GM12878 (cell line): ENCODE measurements at regions of chr1 and their contacts with region 1.

Region 1: GRCh38 chr1:212070720-212071302 is 35.3 kb downstream of the DTL start:
- DNase-seq: no peak
- ATAC-seq: peak; percentile 63
- H3K4me3 ChIP-seq: no peak overlapping the region
- H3K27ac ChIP-seq: no peak overlapping the region
- H3K4me1 ChIP-seq: no peaks in the 10 kb centered on the region
- H3K27me3 ChIP-seq: no peaks in the 10 kb centered on the region
- CTCF ChIP-seq: peak; percentile 51 to 72 (median 54); a peak in 5 of 6 replicates
- EP300 ChIP-seq: no peak
- POLR2A ChIP-seq: no peak
- RAD21 ChIP-seq: peak; percentile 95

Region 2: DNA sequence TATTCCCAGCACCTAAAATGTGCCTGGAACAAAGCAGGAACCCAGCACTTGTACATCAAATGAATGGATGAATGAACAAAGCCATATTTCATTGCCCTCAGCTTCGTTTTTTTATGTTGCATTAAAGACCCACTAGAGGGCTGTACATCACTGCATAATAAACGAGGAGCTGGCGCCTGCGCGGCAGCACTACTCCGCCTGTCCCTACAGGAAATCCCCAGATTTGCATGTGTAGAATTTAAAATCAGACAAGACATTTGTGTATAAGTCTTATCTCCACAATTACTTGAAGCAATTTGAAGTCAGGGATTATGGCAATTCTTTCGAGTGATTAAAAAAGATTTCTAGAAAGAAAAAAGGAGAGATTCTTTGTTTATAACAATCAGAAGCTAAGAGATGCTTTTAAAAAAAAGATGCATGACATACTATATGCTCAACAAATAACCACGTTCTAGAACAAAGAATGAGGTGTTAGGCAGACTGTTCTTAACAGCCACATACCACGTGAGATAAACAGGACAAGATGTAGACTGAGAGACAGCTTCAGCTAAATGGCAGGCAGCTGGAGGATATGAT is 390.0 kb before region 1 on chr1:
- CTCF ChIA-PET with region 1: interaction called, 51 read pairs
- POLR2A ChIA-PET with region 1: interaction called, 3 read pairs
- RAD21 ChIA-PET with region 1: interaction called, 32 read pairs
- SMC1A ChIA-PET with region 1: interaction called, 40 read pairs
- in situ Hi-C with region 1: no loop called
- intact Hi-C with region 1: no loop called
- DNase-seq: peak; percentile 80
- ATAC-seq: peak; percentile 84
- H3K4me3 ChIP-seq: no peak overlapping the region
- H3K27ac ChIP-seq: peak overlapping the region; percentile 38
- H3K4me1 ChIP-seq: peaks cover 16% of the 10 kb centered on the region
- H3K27me3 ChIP-seq: no peaks in the 10 kb centered on the region
- CTCF ChIP-seq: peak; percentile 66 to 87 (median 81); a peak in 5 of 6 replicates
- EP300 ChIP-seq: 0 out of 4 replicates have a peak, but pooled peaks of 1 of the 2 experiments have one; percentile 20
- POLR2A ChIP-seq: no peak
- RAD21 ChIP-seq: peak; percentile 88

Region 3: GRCh38 chr1:211843018-211843417 is 227.8 kb before region 1 on chr1:
- CTCF ChIA-PET with region 1: no interaction called
- POLR2A ChIA-PET with region 1: no interaction called
- RAD21 ChIA-PET with region 1: no interaction called
- SMC1A ChIA-PET with region 1: no interaction called
- in situ Hi-C with region 1: no loop called
- intact Hi-C with region 1: no loop called
- DNase-seq: no peak
- ATAC-seq: peak; percentile 63
- H3K4me3 ChIP-seq: no peak overlapping the region
- H3K27ac ChIP-seq: no peak overlapping the region
- H3K4me1 ChIP-seq: peaks cover 15% of the 10 kb centered on the region
- H3K27me3 ChIP-seq: no peaks in the 10 kb centered on the region
- CTCF ChIP-seq: no peak
- EP300 ChIP-seq: no peak
- POLR2A ChIP-seq: no peak
- RAD21 ChIP-seq: no peak

Region 4: GRCh38 chr1:212045981-212046380 is 24.8 kb before region 1 on chr1:
- CTCF ChIA-PET with region 1: interaction called, 10 read pairs
- POLR2A ChIA-PET with region 1: no interaction called
- RAD21 ChIA-PET with region 1: interaction called, 9 read pairs
- SMC1A ChIA-PET with region 1: interaction called, 11 read pairs
- in situ Hi-C with region 1: no loop called
- intact Hi-C with region 1: no loop called
- DNase-seq: no peak
- ATAC-seq: no peak
- H3K4me3 ChIP-seq: no peak overlapping the region
- H3K27ac ChIP-seq: no peak overlapping the region
- H3K4me1 ChIP-seq: no peaks in the 10 kb centered on the region
- H3K27me3 ChIP-seq: no peaks in the 10 kb centered on the region
- CTCF ChIP-seq: no peak
- EP300 ChIP-seq: no peak
- POLR2A ChIP-seq: no peak
- RAD21 ChIP-seq: no peak

Region 5: DNA sequence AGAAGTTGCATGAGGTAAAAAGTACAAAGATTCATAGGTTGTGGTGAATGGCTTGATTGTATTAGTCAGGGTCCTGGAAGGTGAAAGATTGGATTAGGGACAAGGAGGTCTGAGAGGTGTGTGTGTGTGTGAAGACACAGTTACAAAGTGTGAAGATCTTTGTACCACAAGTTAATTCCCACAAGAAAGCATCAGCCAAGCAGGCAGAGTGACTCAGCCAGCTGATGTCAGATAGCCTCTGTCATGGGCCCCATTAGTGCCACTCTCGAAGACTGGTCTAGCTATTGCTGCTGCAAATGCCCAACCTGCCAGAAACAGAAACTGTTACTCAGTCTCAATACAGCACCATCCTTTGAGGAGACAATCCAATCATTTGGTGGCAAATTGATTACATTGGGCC is 61.2 kb after region 1 on chr1:
- CTCF ChIA-PET with region 1: no interaction called
- POLR2A ChIA-PET with region 1: no interaction called
- RAD21 ChIA-PET with region 1: no interaction called
- SMC1A ChIA-PET with region 1: no interaction called
- in situ Hi-C with region 1: no loop called
- intact Hi-C with region 1: no loop called
- DNase-seq: no peak
- ATAC-seq: no peak; the same call in 2 of the 3 replicates
- H3K4me3 ChIP-seq: no peak overlapping the region
- H3K27ac ChIP-seq: no peak overlapping the region
- H3K4me1 ChIP-seq: no peaks in the 10 kb centered on the region
- H3K27me3 ChIP-seq: no peaks in the 10 kb centered on the region
- CTCF ChIP-seq: no peak
- EP300 ChIP-seq: no peak
- POLR2A ChIP-seq: no peak
- RAD21 ChIP-seq: no peak

Region 6: GRCh38 chr1:212269306-212269705 is 198.5 kb after region 1 on chr1:
- CTCF ChIA-PET with region 1: interaction called, 12 read pairs
- POLR2A ChIA-PET with region 1: no interaction called
- RAD21 ChIA-PET with region 1: interaction called, 4 read pairs
- SMC1A ChIA-PET with region 1: interaction called, 5 read pairs
- in situ Hi-C with region 1: no loop called
- intact Hi-C with region 1: no loop called
- DNase-seq: no peak
- ATAC-seq: no peak
- H3K4me3 ChIP-seq: no peak overlapping the region
- H3K27ac ChIP-seq: no peak overlapping the region
- H3K4me1 ChIP-seq: no peaks in the 10 kb centered on the region
- H3K27me3 ChIP-seq: no peaks in the 10 kb centered on the region; a peak in 1 of 4 replicates
- CTCF ChIP-seq: no peak
- EP300 ChIP-seq: no peak
- POLR2A ChIP-seq: no peak
- RAD21 ChIP-seq: no peak

Region 7: GRCh38 chr1:212315907-212316306 is 245.1 kb after region 1 on chr1:
- CTCF ChIA-PET with region 1: interaction called, 22 read pairs
- POLR2A ChIA-PET with region 1: interaction called, 7 read pairs
- RAD21 ChIA-PET with region 1: interaction called, 35 read pairs
- SMC1A ChIA-PET with region 1: interaction called, 55 read pairs
- in situ Hi-C with region 1: no loop called
- intact Hi-C with region 1: no loop called
- DNase-seq: no peak
- ATAC-seq: peak; percentile 89
- H3K4me3 ChIP-seq: no peak overlapping the region
- H3K27ac ChIP-seq: no peak overlapping the region
- H3K4me1 ChIP-seq: no peaks in the 10 kb centered on the region
- H3K27me3 ChIP-seq: no peaks in the 10 kb centered on the region
- CTCF ChIP-seq: peak; percentile 26 to 39 (median 27); a peak in 4 of 6 replicates
- EP300 ChIP-seq: no peak
- POLR2A ChIP-seq: no peak
- RAD21 ChIP-seq: peak; percentile 51

Region 8: GRCh38 chr1:212368073-212368484 is 297.3 kb after region 1 on chr1:
- CTCF ChIA-PET with region 1: interaction called, 82 read pairs
- POLR2A ChIA-PET with region 1: no interaction called
- RAD21 ChIA-PET with region 1: interaction called, 29 read pairs
- SMC1A ChIA-PET with region 1: interaction called, 55 read pairs
- in situ Hi-C with region 1: loop called (anchors 5 kb)
- intact Hi-C with region 1: loop called (anchors 1 kb)
- DNase-seq: peak; percentile 36
- ATAC-seq: peak; percentile 99
- H3K4me3 ChIP-seq: no peak overlapping the region
- H3K27ac ChIP-seq: no peak overlapping the region
- H3K4me1 ChIP-seq: no peaks in the 10 kb centered on the region
- H3K27me3 ChIP-seq: no peaks in the 10 kb centered on the region
- CTCF ChIP-seq: peak; percentile 77 to 90 (median 87)
- EP300 ChIP-seq: no peak
- POLR2A ChIP-seq: no peak
- RAD21 ChIP-seq: peak; percentile 90